Right ventricle myocardium superior (tissue), 1 donor: ENCODE measurements at regions of chr10 and their contacts with region 1.

Region 1: GRCh38 chr10:4849555-4850242 is 23.7 kb downstream of the AKR1E2 start:
- DNase-seq: peak; percentile 95
- ATAC-seq: peak; percentile 93

Region 2: DNA sequence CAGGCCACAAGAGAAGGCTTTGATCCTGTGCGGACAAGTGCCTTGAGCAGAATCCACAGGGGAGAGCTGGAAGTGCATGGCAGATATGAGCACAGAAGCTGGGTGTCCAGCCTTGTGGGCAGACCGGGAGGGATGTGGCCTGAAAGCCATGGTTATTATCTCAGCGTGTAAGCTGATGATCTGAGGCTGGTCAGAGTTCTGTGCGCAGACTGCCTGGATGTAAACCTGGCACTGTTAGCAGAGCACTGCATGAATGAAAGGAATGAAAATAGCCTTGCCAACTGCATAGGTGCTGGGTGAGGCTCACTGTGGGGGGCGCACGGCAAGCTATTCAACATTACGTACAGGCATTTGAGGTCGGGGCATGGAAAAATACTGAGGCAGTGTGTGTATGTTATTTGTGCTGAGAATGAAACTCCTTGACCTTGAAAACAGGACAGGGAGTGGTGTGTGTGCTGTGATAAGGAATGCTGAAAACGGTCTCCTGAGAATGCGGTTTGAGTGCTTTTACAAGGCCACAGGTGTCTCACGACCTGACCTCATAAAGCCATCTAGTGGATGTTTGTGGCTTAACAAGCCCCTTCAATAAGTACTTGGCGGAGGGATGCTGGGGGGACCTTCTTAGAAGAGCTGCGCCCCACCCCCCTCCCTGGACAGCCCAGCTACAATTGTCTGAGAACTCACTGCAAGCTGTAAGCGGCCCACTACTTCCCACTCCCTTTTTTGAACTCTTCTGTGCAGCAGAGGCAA is 132.2 kb after region 1 on chr10:
- intact Hi-C with region 1: loop called (anchors 5 kb)
- DNase-seq: no peak
- ATAC-seq: peak; percentile 45

Region 3: DNA sequence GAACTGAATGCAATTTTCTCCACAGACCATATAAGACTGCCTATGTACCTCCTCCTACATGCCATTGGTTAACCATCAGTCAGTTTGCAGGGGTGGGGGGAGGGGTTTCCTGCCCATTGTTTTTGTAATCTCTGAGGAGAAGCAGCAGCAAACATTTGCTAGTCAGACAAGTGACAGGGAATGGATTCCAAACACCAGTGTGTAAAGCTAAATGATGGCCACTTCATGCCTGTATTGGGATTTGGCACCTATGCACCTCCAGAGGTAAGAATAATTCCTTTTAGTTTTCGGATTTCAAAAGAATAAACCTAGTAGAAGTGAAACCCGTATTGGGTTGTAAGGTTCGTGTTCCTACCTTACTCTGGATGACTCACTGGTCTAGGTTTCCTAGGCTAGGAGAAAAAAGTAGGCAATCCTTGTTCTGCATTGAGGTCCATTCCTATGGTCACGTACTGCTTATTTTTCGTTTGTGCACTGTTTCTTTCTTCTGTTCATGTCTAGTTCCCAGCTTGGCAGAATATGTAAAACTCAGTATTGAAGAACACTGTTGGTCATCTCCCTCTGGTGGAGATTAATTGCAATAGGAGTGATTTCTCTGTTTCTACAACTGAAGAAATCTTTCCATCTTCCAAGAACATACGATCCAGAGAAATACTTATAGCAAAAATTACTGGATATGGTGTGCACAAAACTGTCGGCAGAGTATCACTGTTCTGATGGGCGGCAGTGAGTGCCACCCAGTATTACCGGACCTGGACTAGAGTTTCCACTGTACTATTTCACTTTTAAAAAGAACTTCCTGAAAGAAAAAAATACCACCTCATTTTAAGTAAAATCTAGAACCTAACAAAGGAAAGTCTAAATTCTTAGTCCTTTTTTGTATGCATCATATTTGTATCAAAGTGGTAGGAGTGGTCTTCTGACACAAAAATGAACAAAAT is 244.8 kb after region 1 on chr10 and contains the start of gene AKR1C3:
- intact Hi-C with region 1: loop called (anchors 2 kb)
- DNase-seq: no peak
- ATAC-seq: peak; percentile 92
- total RNA-seq, gene AKR1C3: 30.3 TPM

Region 4: DNA sequence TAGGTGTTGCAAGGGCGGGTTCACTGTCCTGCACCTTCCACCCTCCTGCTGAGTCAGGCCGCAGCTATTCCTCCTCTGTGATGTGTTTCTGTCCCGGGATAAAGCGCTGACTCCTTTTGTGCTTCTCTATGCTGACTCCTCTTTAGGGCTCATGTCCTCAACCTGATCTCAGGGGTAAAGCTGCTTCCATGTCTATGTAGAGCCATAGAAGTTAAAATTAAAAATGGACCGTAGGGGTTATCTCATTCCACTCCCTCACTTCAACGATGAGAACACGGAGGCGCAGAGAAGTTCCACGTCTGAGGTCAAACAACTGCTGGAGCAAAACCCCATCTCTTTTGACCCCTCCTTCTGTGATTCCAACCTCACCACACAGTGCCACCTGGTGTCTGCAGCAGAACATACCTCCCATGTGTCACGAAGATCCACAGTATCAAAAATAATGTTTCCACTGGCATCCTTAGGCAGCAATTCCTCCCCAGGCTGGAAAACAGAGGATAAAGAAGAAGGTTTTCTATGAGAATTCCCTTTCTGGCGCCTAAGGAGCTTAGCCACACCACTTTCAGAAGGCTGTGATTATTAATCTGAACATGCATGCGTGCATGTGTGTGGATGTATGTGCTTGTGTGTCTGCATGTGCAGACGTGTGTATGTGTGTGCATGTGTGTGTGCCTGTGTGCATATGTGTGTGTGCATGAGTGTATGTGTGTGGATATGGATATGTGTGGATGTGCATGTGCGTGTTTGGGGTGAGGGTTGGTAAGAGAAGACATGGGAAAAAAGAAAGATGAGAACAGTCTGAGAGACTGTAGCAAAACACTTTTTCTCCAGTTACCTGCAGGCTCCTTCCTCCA is 433.8 kb after region 1 on chr10:
- intact Hi-C with region 1: loop called (anchors 5 kb)
- DNase-seq: peak; percentile 71
- ATAC-seq: peak; percentile 97